Head of caudate nucleus (tissue), 42 donors: ENCODE measurements at regions of chr1 and their contacts with region 1.

Region 1: GRCh38 chr1:2133039-2133878 is 61.3 kb downstream of the FAAP20 start:
- DNase-seq: peak; percentile 91 to 99 (median 97)

Region 2: GRCh38 chr1:2174348-2175054 is 41.2 kb after region 1 on chr1:
- intact Hi-C with region 1: loop called (anchors 5 kb)
- DNase-seq: peak in 41 of 42 donors; percentile 41 to 84 (median 64)

Region 3: DNA sequence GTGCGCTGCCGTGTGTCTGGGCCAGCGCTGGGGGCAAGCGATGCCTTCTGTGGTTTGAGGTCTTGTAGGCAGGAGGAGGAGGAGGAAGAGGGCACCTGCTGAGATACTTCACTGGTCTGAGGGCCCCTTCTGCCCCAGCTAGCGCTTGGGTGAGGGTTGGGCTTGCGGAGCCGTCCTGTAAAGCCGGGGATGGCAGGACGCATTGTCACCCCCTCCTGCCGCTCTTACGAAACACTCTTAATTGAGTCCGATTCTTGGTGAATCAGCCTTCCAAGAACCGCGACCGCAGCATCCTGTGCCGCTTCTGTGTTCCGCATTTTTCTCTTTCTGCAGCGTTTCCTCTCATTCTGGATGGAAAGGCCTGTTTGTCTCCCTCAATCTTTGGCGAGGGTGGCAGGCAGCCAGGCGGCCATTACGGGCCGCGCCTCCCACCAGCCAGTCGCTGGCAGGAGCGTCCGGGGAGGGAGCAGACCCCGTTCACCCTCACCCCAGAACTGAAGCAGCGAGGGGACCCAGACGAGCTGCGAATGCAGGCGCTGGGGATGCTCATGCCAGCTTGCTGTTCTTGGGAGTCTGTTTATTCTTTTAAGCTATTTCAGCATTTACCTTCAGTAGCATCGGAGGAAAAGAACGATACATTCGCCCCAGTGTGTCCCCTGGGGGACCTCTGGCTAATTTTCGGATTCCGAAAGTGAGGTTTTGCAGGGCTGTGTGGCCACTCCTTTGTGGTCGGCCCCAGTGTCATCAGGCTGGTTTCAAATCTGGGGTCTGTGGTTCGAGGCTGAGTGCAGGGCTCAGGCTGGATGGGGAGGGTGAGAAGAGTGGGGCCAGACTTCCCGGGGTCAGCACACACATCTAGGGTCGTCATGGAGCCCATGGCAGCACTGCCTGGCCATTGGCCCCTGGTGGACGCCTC is 157.6 kb after region 1 on chr1:
- intact Hi-C with region 1: no loop called
- DNase-seq: peak in 41 of 42 donors; percentile 45 to 88 (median 72)